Ascending aorta (tissue), 2 donors: ENCODE measurements at regions of chr9 and their contacts with region 1.

Region 1: DNA sequence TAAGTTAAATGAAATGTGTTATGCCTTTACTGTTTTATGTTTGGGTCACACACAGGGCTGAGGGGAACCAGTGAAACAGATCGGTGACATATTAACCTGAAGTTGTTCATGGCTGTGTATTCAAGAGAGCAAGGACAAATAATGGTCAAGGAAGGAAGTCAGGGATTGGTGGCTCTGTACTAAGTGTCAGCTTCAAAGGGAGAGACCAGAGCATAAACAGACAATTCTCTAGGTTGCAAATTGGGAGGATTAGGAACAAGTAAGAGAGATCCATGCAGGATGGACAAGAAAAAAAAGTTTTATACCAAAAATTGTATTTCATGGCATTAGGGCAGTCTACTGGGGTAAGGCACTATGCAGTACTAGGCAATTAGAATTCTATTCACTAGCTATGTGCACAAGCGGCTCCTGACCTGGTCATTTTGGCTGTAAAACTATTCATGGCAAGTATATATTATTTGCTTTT is 156.3 kb downstream of the PLPPR1 start:
- DNase-seq: no peak
- H3K4me3 ChIP-seq: no peak overlapping the region
- H3K27ac ChIP-seq: no peak overlapping the region
- H3K4me1 ChIP-seq: no peaks in the 10 kb centered on the region
- H3K27me3 ChIP-seq: no peaks in the 10 kb centered on the region
- CTCF ChIP-seq: no peak

Region 2: DNA sequence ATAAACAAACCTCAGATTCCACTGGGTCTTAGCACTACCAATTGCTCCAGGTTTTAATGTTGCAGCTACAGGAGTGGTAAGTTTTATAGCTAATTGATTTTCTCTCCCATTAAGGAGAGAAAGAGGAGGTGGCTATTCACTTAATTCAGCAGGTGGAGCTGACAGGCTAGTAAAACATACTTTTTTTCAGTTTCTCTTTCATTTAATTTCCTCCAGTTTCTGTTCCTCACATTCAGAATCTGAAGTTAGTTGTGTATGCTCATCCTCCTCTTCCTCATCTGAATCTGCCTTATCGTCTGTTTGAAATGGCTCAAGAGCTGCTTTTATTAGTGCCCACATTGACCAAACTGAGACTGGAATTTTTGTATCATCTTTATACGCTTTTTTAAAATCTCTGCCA is 58.3 kb before region 1 on chr9:
- intact Hi-C with region 1: loop called (anchors 10 kb)
- DNase-seq: no peak
- H3K4me3 ChIP-seq: no peak overlapping the region
- H3K27ac ChIP-seq: no peak overlapping the region
- H3K4me1 ChIP-seq: no peaks in the 10 kb centered on the region
- H3K27me3 ChIP-seq: no peaks in the 10 kb centered on the region
- CTCF ChIP-seq: no peak